ENCODE measurements at regions of chr15 and their contacts with region 1.

Region 1: GRCh38 chr15:93417631-93418030 is 328.6 kb upstream of the RGMA start:
- DNase-seq: peak; percentile 63 to 85 (median 80)
- ATAC-seq: peak; percentile 77 to 90 (median 83)
- H3K4me3 ChIP-seq: no peak overlapping the region
- H3K27ac ChIP-seq: peak overlapping the region in 7 of 12 donors; percentile 11 to 57 (median 52)
- H3K4me1 ChIP-seq: peaks cover 0 to 17% (median 0%) of the 10 kb centered on the region in 12 donors
- H3K27me3 ChIP-seq: peaks cover 0 to 10% (median 0%) of the 10 kb centered on the region in 9 donors
- CTCF ChIP-seq: no peak
- POLR2A ChIP-seq: no peak

Region 2: GRCh38 chr15:93479715-93480114 is 62.1 kb after region 1 on chr15:
- intact Hi-C with region 1: loop called in 1 of 10 experiments (anchors 10 kb)
- DNase-seq: peak; percentile 36 to 80 (median 54)
- ATAC-seq: peak; percentile 41 to 81 (median 68)
- H3K4me3 ChIP-seq: no peak overlapping the region
- H3K27ac ChIP-seq: peak overlapping the region in 5 of 12 donors; percentile 8 to 63 (median 52)
- H3K4me1 ChIP-seq: peaks cover 0 to 11% (median under 1%) of the 10 kb centered on the region in 12 donors
- H3K27me3 ChIP-seq: peaks cover 0 to 4% (median 0%) of the 10 kb centered on the region in 9 donors
- CTCF ChIP-seq: no peak
- POLR2A ChIP-seq: no peak

Region 3: GRCh38 chr15:93587059-93587521 is 169.5 kb after region 1 on chr15:
- intact Hi-C with region 1: loop called in 1 of 10 experiments (anchors 10 kb)
- DNase-seq: peak in 3 of 5 donors; percentile 34 to 56 (median 43)
- ATAC-seq: peak in 3 of 4 donors; percentile 77 to 86 (median 80)
- H3K4me3 ChIP-seq: no peak overlapping the region
- H3K27ac ChIP-seq: peak overlapping the region in 4 of 12 donors; percentile 41 to 75 (median 49)
- H3K4me1 ChIP-seq: peaks cover 0 to 9% (median 0%) of the 10 kb centered on the region in 12 donors
- H3K27me3 ChIP-seq: no peaks in the 10 kb centered on the region
- CTCF ChIP-seq: no peak
- POLR2A ChIP-seq: no peak

Region 4: GRCh38 chr15:93631958-93632618 is 214.5 kb after region 1 on chr15:
- intact Hi-C with region 1: no loop called
- DNase-seq: no peak
- ATAC-seq: no peak
- H3K4me3 ChIP-seq: no peak overlapping the region
- H3K27ac ChIP-seq: no peak overlapping the region
- H3K4me1 ChIP-seq: no peaks in the 10 kb centered on the region
- H3K27me3 ChIP-seq: no peaks in the 10 kb centered on the region
- CTCF ChIP-seq: no peak
- POLR2A ChIP-seq: no peak

Measured in heart left ventricle (tissue), 16 donors.